Natural killer cell (primary cell): ENCODE measurements at regions of chr7 and their contacts with region 1.

Region 1: GRCh38 chr7:116211006-116211912 is 920 bp downstream of the TES start:
- DNase-seq: peak; percentile 75 to 91
- ATAC-seq: peak; percentile 76 to 90 (median 85)
- H3K4me3 ChIP-seq: peak overlapping the region; percentile 96
- H3K4me3 Mint-ChIP-seq: peak overlapping the region; percentile 93
- H3K27ac ChIP-seq: peak overlapping the region; percentile 85
- H3K27ac Mint-ChIP-seq: peak overlapping the region; percentile 84 to 99
- H3K4me1 ChIP-seq: peaks cover 20% of the 10 kb centered on the region
- H3K4me1 Mint-ChIP-seq: peaks cover 49 to 57% of the 10 kb centered on the region in 2 donors
- H3K27me3 ChIP-seq: no peaks in the 10 kb centered on the region
- H3K27me3 Mint-ChIP-seq: no peaks in the 10 kb centered on the region
- CTCF ChIP-seq: no peak

Region 2: DNA sequence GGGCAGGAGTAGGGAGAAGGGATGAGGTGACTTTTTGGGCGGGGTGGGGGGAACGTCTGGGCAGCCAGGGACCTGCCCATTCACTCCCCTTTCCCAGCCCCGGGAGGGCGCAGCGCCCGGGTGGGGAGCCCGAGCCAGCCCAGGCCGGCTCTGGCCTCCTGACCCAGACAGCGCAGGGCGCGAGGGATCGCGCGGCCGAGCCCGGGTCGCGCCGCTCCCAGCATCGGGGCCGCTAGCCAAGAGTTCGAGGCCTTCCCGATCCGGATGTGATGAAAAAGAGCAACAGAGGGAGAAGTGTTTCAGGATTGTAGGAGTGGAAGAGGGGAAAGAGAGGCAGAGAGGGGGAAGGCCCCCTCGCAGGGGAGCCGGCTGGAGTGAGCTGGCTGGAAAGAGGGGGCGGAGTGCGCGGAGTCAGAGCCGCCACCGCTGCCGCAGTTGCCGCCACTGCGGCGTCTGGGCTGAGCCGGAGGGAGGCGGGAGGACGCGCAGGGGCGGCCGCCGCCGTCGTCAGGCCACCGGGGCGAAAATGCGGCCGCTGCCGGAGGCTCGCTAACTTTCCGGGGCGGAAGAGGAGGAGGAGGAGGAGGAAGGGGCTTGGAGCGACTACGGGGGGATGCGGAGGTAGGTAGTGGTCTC is 1289.1 kb before region 1 on chr7 and contains the start of gene MDFIC:
- intact Hi-C with region 1: loop called (anchors 10 kb)
- DNase-seq: peak; percentile 53 to 77
- ATAC-seq: peak; percentile 76 to 78 (median 77)
- H3K4me3 ChIP-seq: peak within 1 kb of the TSS; percentile 96
- H3K4me3 Mint-ChIP-seq: peak within 1 kb of the TSS; percentile 96
- H3K27ac ChIP-seq: peak within 1 kb of the TSS; percentile 92
- H3K27ac Mint-ChIP-seq: peak within 1 kb of the TSS; percentile 78 to 95
- H3K4me1 ChIP-seq: no peaks in the 10 kb centered on the region
- H3K4me1 Mint-ChIP-seq: peaks cover 20 to 37% of the 10 kb centered on the region in 2 donors
- H3K27me3 ChIP-seq: no peaks in the 10 kb centered on the region
- H3K27me3 Mint-ChIP-seq: no peaks in the 10 kb centered on the region
- CTCF ChIP-seq: no peak
- total RNA-seq, gene MDFIC: 19.1 to 24.0 (median 21.8) TPM

Region 3: GRCh38 chr7:116180302-116180701 is 31.0 kb before region 1 on chr7:
- intact Hi-C with region 1: loop called (anchors 2 kb)
- DNase-seq: peak in 1 of 2 donors; percentile 80
- ATAC-seq: peak; percentile 82 to 97 (median 89)
- H3K4me3 ChIP-seq: no peak overlapping the region
- H3K4me3 Mint-ChIP-seq: no peak overlapping the region
- H3K27ac ChIP-seq: no peak overlapping the region
- H3K27ac Mint-ChIP-seq: no peak overlapping the region
- H3K4me1 ChIP-seq: no peaks in the 10 kb centered on the region
- H3K4me1 Mint-ChIP-seq: peaks cover 4% of the 10 kb centered on the region in 2 donors
- H3K27me3 ChIP-seq: no peaks in the 10 kb centered on the region
- H3K27me3 Mint-ChIP-seq: no peaks in the 10 kb centered on the region
- CTCF ChIP-seq: peak; percentile 91

Region 4: DNA sequence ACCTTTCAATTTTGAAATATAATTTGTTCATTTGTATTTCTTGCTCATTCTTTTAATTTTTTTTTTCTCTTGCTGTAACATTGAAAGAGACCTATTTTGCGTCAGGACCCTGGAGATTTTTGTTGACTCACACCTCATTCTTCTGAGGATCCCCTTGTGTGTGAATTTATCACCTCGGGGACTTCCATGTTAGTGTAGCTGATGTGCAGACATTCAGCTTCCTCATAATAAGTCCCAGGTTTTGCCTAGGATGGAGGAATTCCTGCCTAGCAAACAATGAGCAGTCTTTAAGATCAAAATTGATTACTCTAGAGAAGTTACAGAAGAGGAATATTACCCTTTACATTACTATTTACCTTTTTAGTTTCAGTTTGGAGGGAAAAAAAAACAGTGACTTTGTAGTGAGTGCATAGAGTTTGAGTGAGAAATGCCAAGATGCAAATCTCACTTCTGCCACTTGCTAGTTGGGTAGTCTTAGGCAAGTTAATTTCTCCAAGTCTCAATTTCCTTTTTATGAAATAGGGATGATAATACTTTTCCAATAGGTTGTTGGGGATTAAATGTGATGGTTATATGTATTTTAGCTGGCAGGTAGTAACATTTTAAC is 13.3 kb after region 1 on chr7:
- intact Hi-C with region 1: loop called (anchors 1 kb)
- DNase-seq: peak in 1 of 2 donors; percentile 67
- ATAC-seq: peak; percentile 84 to 87 (median 86)
- H3K4me3 ChIP-seq: peak overlapping the region; percentile 24
- H3K4me3 Mint-ChIP-seq: peak overlapping the region; percentile 80
- H3K27ac ChIP-seq: peak overlapping the region; percentile 69
- H3K27ac Mint-ChIP-seq: peak overlapping the region; percentile 89 to 93
- H3K4me1 ChIP-seq: peaks cover 26% of the 10 kb centered on the region
- H3K4me1 Mint-ChIP-seq: peaks cover 82 to 87% of the 10 kb centered on the region in 2 donors
- H3K27me3 ChIP-seq: no peaks in the 10 kb centered on the region
- H3K27me3 Mint-ChIP-seq: no peaks in the 10 kb centered on the region
- CTCF ChIP-seq: no peak

Region 5: DNA sequence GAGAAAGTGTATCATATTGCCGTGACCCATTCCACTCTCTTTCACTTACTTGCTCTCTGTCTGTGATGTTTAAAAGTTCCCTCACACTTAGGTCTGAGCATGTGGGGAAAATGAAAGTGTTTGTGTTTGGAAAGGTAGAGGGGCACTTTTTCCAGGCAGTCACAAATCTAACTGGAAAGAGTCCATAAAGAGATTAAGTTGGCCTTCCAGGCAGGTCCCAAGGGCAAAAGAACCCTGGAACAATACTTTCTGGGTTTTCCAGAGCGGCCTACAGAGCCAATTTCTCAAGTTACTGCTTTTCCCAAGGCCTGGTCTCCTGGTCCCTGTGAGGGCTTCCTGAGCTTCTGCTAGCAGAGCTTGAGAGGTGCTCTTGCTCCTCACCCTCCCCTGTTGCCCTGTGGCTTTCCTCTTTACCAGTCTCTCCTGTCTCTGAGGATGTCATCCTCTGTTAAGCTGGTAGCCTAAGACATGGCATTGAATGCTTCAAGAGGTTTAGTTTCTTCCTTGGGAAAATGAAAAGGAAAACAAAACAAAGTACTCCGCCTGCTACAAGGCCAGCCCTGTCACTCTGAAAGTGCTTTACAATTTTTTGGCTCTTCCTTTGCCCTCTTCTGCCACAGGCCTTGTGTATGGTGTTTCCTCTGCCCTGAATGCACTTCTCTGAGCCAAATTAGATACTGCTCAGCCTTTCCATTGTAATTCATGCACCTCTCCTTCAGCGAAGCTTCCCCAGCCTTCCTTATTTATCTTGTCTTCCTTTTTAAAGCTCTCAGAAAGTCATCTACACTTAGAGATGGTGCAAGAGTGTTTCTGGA is 19.1 kb after region 1 on chr7:
- intact Hi-C with region 1: loop called (anchors 1 kb)
- DNase-seq: no peak
- ATAC-seq: peak; percentile 23 to 34 (median 24)
- H3K4me3 ChIP-seq: no peak overlapping the region
- H3K4me3 Mint-ChIP-seq: peak overlapping the region; percentile 71
- H3K27ac ChIP-seq: peak overlapping the region; percentile 65
- H3K27ac Mint-ChIP-seq: peak overlapping the region; percentile 93 to 94
- H3K4me1 ChIP-seq: peaks cover 40% of the 10 kb centered on the region
- H3K4me1 Mint-ChIP-seq: peaks cover 79 to 88% of the 10 kb centered on the region in 2 donors
- H3K27me3 ChIP-seq: no peaks in the 10 kb centered on the region
- H3K27me3 Mint-ChIP-seq: no peaks in the 10 kb centered on the region
- CTCF ChIP-seq: no peak

Region 6: DNA sequence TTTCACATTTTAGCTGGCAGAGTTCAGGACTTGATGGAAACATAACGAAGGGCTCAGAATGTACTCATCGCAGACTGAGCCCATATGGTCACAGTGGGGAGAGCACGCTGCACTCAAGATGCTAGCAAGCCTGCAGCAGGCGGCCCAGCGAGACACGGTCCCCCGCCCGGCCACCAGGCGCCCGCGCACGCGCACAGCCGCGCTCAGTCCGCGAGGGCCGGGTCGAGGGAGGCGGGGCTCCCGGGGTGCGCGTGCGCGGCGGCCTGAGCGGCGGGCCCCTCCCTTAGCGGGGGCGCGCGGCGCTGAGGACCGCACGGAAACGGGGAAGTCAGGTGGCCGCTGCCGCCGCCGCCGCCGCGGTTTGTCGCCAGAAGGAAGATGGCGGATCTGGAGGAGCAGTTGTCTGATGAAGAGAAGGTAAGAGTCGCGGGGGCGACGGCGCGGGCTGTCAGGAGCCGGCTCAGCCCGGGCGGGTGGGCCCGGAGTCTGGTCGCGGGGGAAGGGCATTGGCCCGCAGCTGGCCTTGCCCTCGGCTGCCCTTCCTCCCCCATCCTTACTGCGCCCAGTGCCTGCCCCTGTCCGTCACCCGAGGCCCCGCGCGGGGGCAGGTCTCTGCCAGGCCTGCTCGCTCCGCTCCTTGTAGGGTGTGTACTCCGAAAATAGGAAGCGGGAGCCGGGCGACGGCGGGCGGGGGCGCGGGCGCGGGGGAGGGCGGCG is 651.1 kb after region 1 on chr7 and contains the start of gene CAPZA2:
- intact Hi-C with region 1: loop called (anchors 5 kb)
- DNase-seq: peak; percentile 97 to 98
- ATAC-seq: peak; percentile 90 to 98 (median 91)
- H3K4me3 ChIP-seq: peak within 1 kb of the TSS; percentile 80
- H3K4me3 Mint-ChIP-seq: peak within 1 kb of the TSS; percentile 99
- H3K27ac ChIP-seq: peak within 1 kb of the TSS; percentile 88
- H3K27ac Mint-ChIP-seq: peak within 1 kb of the TSS; percentile 93 to 95
- H3K4me1 ChIP-seq: peaks cover 12% of the 10 kb centered on the region
- H3K4me1 Mint-ChIP-seq: peaks cover 36 to 48% of the 10 kb centered on the region in 2 donors
- H3K27me3 ChIP-seq: no peaks in the 10 kb centered on the region
- H3K27me3 Mint-ChIP-seq: peaks cover 16 to 20% of the 10 kb centered on the region in 2 donors
- CTCF ChIP-seq: peak; percentile 36
- total RNA-seq, gene CAPZA2: 97.0 to 135 (median 131) TPM